ENCODE measurements at regions of chr3 and their contacts with region 1.

Region 1: GRCh38 chr3:39990532-39990931 is 181.1 kb downstream of the MYRIP start:
- DNase-seq: no peak
- H3K4me3 Mint-ChIP-seq: no peak overlapping the region
- H3K27ac Mint-ChIP-seq: no peak overlapping the region
- H3K4me1 Mint-ChIP-seq: no peaks in the 10 kb centered on the region
- H3K27me3 Mint-ChIP-seq: no peaks in the 10 kb centered on the region

Region 2: DNA sequence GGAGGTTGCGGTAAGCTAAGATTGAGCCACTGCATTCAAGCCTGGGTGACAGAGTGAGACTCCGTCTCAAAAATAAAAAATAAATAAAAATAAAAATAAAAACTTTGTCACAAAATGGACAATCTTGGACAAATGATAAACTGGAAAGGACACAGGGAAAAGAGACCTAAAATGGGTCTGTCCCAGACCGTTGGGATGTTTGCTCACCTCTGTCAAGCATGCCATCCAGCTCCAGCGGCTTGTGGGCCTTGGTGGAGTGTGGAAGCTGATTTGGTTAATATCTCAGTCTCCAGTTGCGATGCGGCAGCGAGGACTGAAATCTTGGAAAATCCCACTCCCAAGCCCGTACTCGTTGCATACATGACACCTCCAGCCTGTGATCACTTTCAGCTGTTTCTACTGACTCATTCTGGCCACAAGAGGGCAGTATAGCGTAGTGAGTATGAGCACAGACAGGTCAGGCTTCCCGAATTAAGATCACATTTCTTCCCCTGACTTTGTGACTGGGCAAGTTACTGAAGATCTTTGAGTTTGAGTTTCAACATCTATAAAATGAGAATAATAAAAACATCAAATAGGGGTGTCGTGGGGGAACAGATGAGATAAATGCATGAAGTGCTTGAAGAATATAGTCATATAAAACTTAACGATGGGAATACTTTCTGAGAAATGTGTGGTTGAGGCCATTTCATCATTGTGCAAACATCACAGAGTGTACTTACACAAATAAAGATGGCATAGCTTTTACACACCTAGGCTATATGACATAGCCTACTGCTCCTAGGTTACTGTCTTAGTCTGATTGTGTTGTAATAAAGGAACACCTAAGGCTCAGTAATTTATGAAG is 542.7 kb before region 1 on chr3:
- intact Hi-C with region 1: loop called (anchors 1 kb)
- DNase-seq: peak; percentile 46
- H3K4me3 Mint-ChIP-seq: no peak overlapping the region
- H3K27ac Mint-ChIP-seq: no peak overlapping the region
- H3K4me1 Mint-ChIP-seq: no peaks in the 10 kb centered on the region
- H3K27me3 Mint-ChIP-seq: peaks cover 11% of the 10 kb centered on the region

Region 3: DNA sequence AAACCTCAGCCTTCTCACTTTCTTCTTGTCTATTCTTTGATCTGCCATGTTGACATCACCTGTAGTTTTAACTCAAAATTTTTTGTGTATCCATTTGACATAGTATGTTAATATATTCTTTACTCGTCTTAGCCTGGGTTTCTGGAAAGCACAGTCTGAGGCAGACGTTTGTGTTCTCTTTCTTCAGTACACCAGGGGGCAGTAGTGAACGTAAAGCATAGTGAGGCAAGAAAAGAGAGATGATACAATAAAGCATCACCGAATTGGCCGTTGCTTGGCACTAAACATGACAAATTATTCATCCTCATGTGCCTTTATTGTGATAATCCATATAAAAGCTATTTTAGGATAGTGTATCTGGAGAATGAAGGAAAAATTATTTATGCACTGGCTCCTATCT is 322.1 kb before region 1 on chr3:
- intact Hi-C with region 1: loop called (anchors 2 kb)
- DNase-seq: no peak
- H3K4me3 Mint-ChIP-seq: no peak overlapping the region
- H3K27ac Mint-ChIP-seq: no peak overlapping the region
- H3K4me1 Mint-ChIP-seq: no peaks in the 10 kb centered on the region
- H3K27me3 Mint-ChIP-seq: peaks cover 4% of the 10 kb centered on the region

Region 4: DNA sequence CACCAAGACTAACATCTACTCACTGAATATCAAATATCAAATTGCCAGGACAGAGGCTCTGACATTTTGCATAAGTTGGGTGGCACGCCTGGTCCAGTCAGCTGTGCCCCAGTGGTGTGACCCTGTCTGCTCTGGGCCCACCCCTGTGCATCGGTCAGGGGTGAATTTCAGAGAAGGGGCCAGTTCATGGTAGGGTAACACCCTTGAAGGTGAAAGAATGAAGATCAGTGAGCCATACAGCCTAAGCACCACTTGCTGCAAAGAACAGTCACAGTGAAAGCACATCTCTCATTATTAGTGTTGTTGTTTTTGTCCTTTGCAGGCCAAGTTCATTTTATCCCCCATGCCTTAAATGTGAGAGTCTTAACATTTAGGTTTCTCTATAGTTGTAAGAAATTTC is 94.3 kb before region 1 on chr3:
- intact Hi-C with region 1: no loop called
- DNase-seq: no peak
- H3K4me3 Mint-ChIP-seq: no peak overlapping the region
- H3K27ac Mint-ChIP-seq: no peak overlapping the region
- H3K4me1 Mint-ChIP-seq: no peaks in the 10 kb centered on the region
- H3K27me3 Mint-ChIP-seq: no peaks in the 10 kb centered on the region

Measured in activated T-helper 1 cell treated with anti-CD3 and anti-CD28 coated beads, Interleukin-12 subunit alpha, Interleukin-12 subunit beta, Interleukin-2, Interleukin-4 antibody, amounts not matched to agents 30 ng/mL and 10 ng/mL and 1 ng/mL, durations not matched to agents 14 hours and 24 hours and 36 hours (primary cell).